Pancreas (tissue), 10 donors: ENCODE measurements at regions of chr17 and their contacts with region 1.

Region 1: GRCh38 chr17:40287494-40288369 is at the start of gene CDC6:
- DNase-seq: peak; percentile 95 to 99 (median 98)
- ATAC-seq: peak; percentile 95 to 98 (median 96)
- H3K4me3 ChIP-seq: peak within 1 kb of the TSS; percentile 33 to 70 (median 42)
- H3K27ac ChIP-seq: no peak within 1 kb of the TSS
- H3K4me1 ChIP-seq: peaks cover 0 to 5% (median 5%) of the 10 kb centered on the region in 3 donors
- H3K27me3 ChIP-seq: no peaks in the 10 kb centered on the region
- CTCF ChIP-seq: no peak
- total RNA-seq, gene CDC6: 0.71 to 3.3 (median 2.0) TPM

Region 2: DNA sequence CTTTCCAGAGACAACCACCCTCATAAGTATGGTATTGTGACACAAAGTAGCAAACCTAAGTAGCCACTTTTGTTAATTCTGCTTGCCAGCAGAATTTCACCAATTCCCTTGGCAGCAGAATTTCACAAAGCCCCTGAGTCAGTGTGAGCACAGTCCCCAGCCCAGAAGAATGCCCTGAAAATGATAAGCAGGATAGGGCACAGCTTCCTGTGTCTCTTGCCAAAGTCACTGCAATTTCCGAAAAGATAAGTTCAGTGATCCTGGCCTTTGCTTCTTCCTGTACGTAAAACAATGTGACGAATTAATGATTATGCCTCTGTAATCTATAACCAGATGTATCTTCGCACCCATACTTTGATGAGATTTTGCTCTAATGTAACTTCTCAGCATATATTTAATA is 84.6 kb before region 1 on chr17:
- intact Hi-C with region 1: loop called in 2 of 3 experiments (anchors 5 to 10 kb)
- DNase-seq: no peak
- ATAC-seq: no peak
- H3K4me3 ChIP-seq: no peak overlapping the region
- H3K27ac ChIP-seq: no peak overlapping the region
- H3K4me1 ChIP-seq: no peaks in the 10 kb centered on the region
- H3K27me3 ChIP-seq: no peaks in the 10 kb centered on the region
- CTCF ChIP-seq: no peak

Region 3: DNA sequence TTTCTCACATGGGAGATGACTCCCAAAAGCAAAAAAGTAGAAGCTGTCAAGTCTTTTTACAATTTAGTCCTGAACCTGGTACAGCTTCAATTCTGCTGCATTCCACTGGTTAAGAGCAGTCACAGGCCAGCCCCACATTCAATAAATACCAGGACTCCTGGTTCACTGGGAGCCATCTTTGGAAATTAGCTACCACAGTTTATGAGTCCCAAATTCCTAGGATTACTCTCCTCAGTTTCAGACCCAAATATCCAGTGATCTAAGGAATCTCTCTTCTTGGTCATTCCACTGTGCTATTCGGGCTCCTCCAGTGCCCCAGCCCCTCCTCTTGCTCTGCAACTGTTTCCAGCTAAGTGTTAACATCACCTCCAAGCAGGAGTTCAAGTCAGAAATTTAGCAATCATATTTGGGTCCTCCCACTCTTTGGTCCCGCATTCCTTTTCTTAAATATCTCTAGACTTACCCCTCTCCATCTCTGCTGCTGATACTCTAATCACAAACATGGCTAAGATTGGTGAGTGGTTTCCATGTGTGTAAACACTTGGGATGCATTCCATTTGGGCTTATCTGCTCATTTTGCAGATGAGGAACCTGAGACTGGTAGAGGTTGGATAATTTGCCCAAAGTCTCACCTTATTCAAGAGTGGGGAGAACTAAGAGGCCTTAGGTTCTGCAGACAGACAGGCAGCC is 78.2 kb before region 1 on chr17:
- intact Hi-C with region 1: loop called in 2 of 3 experiments (anchors 5 to 10 kb)
- DNase-seq: peak in 1 of 6 donors; percentile 1
- ATAC-seq: no peak
- H3K4me3 ChIP-seq: no peak overlapping the region
- H3K27ac ChIP-seq: no peak overlapping the region
- H3K4me1 ChIP-seq: no peaks in the 10 kb centered on the region
- H3K27me3 ChIP-seq: no peaks in the 10 kb centered on the region
- CTCF ChIP-seq: no peak

Region 4: GRCh38 chr17:40219073-40219860 is 68.5 kb before region 1 on chr17 and contains the start of gene WIPF2:
- intact Hi-C with region 1: loop called in 1 of 3 experiments (anchors 5 kb)
- DNase-seq: peak; percentile 96 to 98 (median 97)
- ATAC-seq: peak; percentile 94 to 98 (median 96)
- H3K4me3 ChIP-seq: peak within 1 kb of the TSS; percentile 50 to 63 (median 54)
- H3K27ac ChIP-seq: peak within 1 kb of the TSS; percentile 53 to 88 (median 84)
- H3K4me1 ChIP-seq: peaks cover 0 to 20% (median 5%) of the 10 kb centered on the region in 3 donors
- H3K27me3 ChIP-seq: no peaks in the 10 kb centered on the region
- CTCF ChIP-seq: peak; percentile 34 to 89 (median 72)
- total RNA-seq, gene WIPF2: 11.8 to 21.7 (median 14.6) TPM